Activated CD4-positive, alpha-beta T cell treated with anti-CD3 and anti-CD28 coated beads, Interleukin-2, amount 10 ng/mL, durations not matched to agents 7 days and 5 days (primary cell): ENCODE measurements at regions of chr15 and their contacts with region 1.

Region 1: DNA sequence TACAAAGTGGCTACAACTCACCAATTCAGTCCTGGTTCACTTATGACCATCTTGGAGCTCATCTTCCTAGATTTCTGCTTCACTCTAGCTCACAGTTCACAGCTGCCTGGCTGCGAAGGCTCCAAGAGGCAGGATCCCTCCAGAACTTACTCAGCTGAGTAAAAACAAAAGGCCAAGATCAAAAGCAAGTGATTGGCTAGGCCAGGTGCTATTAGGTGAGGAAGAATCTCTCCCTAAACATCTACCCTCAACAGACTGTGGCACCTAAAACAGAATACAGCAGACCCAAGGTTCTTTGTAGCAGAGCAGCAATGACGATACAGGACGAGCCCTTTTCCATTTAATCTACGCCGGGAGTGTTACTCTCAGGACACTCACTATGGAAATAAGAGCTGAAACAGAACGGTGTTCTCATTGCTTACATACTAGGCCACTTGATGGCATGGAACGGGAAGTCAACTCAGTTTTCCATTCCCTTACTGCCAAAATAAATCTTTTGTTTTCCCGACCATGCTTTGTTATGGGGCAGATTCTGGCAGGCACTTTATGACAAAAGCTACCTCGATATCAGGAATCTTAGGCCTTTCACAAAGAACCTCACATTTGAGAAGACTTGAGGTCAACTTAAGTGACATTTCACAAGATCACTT is 901 bp downstream of the ICE2 start:
- DNase-seq: no peak
- H3K4me3 Mint-ChIP-seq: peak overlapping the region; percentile 93
- H3K27ac Mint-ChIP-seq: peak overlapping the region; percentile 97
- H3K4me1 Mint-ChIP-seq: peaks cover 55% of the 10 kb centered on the region
- H3K27me3 Mint-ChIP-seq: no peaks in the 10 kb centered on the region

Region 2: DNA sequence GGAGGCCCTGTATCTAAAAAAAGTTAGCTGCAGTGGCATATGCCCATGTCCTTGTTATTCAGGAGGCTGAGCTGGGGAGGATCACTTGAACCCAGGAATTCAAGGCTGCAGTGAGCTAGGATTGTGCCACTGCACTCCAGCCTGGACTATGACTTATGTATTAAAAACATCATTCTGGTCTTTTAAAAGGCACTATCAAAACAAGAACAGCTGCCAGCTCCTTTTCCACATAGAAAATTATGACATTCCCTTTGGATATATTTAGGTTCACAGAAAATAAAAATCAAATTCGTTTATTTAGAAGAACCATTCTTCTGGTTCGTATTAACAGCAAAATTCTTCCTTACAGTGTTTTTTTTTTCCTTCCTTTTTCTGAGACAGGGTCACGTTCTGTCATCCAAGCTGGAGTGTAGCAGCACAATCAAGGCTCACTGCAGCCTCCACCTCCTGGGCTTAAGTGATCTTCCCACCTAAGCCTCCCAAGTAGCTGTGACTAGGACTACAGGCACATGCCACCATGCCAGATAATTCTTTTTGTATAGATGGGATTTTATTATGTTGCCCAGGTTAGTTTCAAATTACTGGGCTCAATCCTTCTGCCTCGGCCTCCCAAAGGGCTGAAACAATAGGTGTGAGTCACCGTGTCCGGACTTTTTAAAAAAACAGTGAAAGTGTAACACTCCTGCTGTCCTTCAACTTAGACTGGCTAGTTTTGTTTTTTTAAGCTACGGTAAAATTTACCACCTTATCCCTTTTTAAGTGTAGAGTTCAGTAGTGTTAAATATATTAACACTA is 13.0 kb before region 1 on chr15:
- CTCF ChIA-PET with region 1: no interaction called
- POLR2A ChIA-PET with region 1: interaction called, 11 read pairs
- DNase-seq: no peak
- H3K4me3 Mint-ChIP-seq: no peak overlapping the region
- H3K27ac Mint-ChIP-seq: no peak overlapping the region
- H3K4me1 Mint-ChIP-seq: peaks cover 9% of the 10 kb centered on the region
- H3K27me3 Mint-ChIP-seq: no peaks in the 10 kb centered on the region

Region 3: GRCh38 chr15:60541481-60542299 is 63.6 kb after region 1 on chr15:
- CTCF ChIA-PET with region 1: no interaction called
- POLR2A ChIA-PET with region 1: no interaction called
- DNase-seq: no peak
- H3K4me3 Mint-ChIP-seq: no peak overlapping the region
- H3K27ac Mint-ChIP-seq: peak overlapping the region; percentile 58
- H3K4me1 Mint-ChIP-seq: peaks cover 84% of the 10 kb centered on the region
- H3K27me3 Mint-ChIP-seq: no peaks in the 10 kb centered on the region